Uterus (tissue), 4 donors: ENCODE measurements at regions of chr10 and their contacts with region 1.

Region 1: GRCh38 chr10:131900350-131901146 is at the start of gene PPP2R2D:
- DNase-seq: peak; percentile 91 to 93
- H3K4me3 ChIP-seq: peak within 1 kb of the TSS; percentile 59 to 100
- H3K27ac ChIP-seq: peak within 1 kb of the TSS; percentile 88 to 94
- H3K4me1 ChIP-seq: no peaks in the 10 kb centered on the region
- H3K27me3 ChIP-seq: peaks cover 0 to 3% of the 10 kb centered on the region in 2 donors
- CTCF ChIP-seq: no peak
- POLR2A ChIP-seq: peak; percentile 38 to 73
- total RNA-seq, gene PPP2R2D: 21.2 to 43.2 (median 36.3) TPM

Region 2: GRCh38 chr10:131860806-131861440 is 39.6 kb before region 1 on chr10:
- intact Hi-C with region 1: no loop called
- DNase-seq: no peak
- H3K4me3 ChIP-seq: no peak overlapping the region
- H3K27ac ChIP-seq: no peak overlapping the region
- H3K4me1 ChIP-seq: no peaks in the 10 kb centered on the region
- H3K27me3 ChIP-seq: no peaks in the 10 kb centered on the region
- CTCF ChIP-seq: no peak
- POLR2A ChIP-seq: no peak

Region 3: GRCh38 chr10:131972474-131973071 is 72.0 kb after region 1 on chr10:
- intact Hi-C with region 1: loop called (anchors 10 kb)
- DNase-seq: peak in 1 of 2 donors; percentile 38
- H3K4me3 ChIP-seq: no peak overlapping the region
- H3K27ac ChIP-seq: no peak overlapping the region
- H3K4me1 ChIP-seq: no peaks in the 10 kb centered on the region
- H3K27me3 ChIP-seq: no peaks in the 10 kb centered on the region
- CTCF ChIP-seq: no peak
- POLR2A ChIP-seq: no peak